Pancreas (tissue), 10 donors: ENCODE measurements at regions of chr17 and their contacts with region 1.

Region 1: GRCh38 chr17:34199932-34200534 is 55.1 kb upstream of the CCL2 start:
- DNase-seq: peak in 5 of 6 donors; percentile 60 to 83 (median 66)
- ATAC-seq: peak; percentile 87 to 99 (median 97)
- H3K4me3 ChIP-seq: no peak overlapping the region
- H3K27ac ChIP-seq: no peak overlapping the region
- H3K4me1 ChIP-seq: peaks cover 0 to 4% (median 0%) of the 10 kb centered on the region in 3 donors
- H3K27me3 ChIP-seq: peaks cover 0 to 36% (median 12%) of the 10 kb centered on the region in 4 donors
- CTCF ChIP-seq: peak; percentile 93 to 100 (median 98)

Region 2: DNA sequence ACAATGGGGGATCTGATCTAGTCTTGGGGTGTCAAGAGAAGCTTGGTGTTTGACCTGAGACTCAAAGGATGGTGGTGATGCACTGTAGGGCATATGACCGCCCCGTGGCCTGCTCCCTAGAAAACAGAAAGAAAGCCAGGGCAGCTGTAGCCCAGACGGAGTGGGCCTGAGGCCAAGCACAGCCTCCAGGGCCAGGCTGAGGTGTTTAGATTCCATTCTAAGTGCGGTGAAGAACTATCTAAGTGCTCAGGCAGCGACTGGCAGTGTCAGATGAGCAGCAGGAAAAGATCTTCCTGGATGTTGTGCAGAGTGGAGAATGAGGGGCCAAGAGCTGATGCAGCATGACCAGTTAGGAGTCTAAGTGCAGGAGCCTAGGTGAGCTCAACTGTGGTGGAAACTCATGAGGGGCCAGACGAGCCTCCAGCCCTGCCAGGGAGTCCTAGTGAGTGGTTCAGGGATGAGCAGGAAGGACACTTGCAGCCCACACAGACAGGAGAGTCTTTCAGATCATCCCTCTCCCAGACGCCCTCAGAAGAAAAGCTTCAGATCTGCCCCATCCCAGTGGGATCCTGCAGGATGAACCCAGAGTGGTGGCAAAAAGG is 259.2 kb before region 1 on chr17:
- intact Hi-C with region 1: no loop called
- DNase-seq: no peak
- ATAC-seq: peak in 2 of 4 donors; percentile 37 to 61
- H3K4me3 ChIP-seq: no peak overlapping the region
- H3K27ac ChIP-seq: no peak overlapping the region
- H3K4me1 ChIP-seq: peaks cover 0 to 16% (median 0%) of the 10 kb centered on the region in 3 donors
- H3K27me3 ChIP-seq: no peaks in the 10 kb centered on the region
- CTCF ChIP-seq: no peak

Region 3: DNA sequence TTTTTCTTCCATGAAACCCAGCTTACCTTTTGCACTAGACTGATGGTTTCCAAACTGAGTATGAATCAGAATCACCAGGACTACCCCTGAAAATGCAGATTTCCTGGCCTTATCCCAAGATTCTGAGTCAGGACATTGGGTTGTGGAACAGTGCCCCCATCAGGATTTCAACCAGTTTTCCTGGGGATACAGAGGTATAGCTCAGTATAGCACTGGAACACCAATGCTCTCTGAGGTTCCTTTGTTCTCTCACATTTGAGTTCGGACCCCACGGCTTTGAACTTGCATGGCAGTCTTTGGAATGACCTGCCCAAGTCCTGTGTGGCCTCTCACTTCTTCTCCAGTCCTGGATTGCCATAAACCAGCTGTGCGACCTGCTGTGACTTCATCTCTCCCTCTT is 106.4 kb after region 1 on chr17:
- intact Hi-C with region 1: loop called in 1 of 3 experiments (anchors 10 kb)
- DNase-seq: peak in 2 of 6 donors; percentile 17 to 23
- ATAC-seq: peak in 3 of 4 donors; percentile 21 to 81 (median 77)
- H3K4me3 ChIP-seq: no peak overlapping the region
- H3K27ac ChIP-seq: no peak overlapping the region
- H3K4me1 ChIP-seq: no peaks in the 10 kb centered on the region
- H3K27me3 ChIP-seq: no peaks in the 10 kb centered on the region
- CTCF ChIP-seq: peak in 1 of 4 donors; percentile 10

Region 4: DNA sequence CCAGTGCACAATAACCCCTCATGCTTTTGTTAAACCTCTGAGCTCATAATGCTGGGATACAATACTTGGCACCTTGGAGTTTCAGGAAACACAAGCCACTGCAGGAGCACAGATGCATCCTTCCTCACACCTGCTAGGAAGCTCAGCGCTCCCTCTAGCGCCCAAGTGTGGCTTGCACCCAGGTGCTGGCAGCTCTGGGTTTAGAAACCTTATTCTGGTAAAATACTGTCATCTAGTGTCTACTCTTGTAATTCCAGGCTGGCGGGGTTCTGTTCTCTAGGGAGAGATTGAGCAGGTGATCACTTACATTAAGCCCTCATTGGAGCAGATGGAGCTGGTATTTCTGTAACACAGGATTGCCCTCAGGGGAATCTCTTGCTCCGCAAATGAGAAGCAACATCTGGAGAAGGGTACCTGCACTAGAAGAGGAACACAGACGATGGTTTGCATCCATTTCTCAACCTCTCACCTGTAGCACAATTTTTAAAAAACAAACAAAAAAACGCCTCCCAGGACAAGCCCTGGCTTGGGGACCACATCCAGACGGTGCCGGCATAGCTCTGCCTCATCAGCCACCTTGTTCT is 161.5 kb after region 1 on chr17:
- intact Hi-C with region 1: loop called (anchors 5 to 10 kb)
- DNase-seq: peak; percentile 81 to 94 (median 89)
- ATAC-seq: peak; percentile 93 to 99 (median 98)
- H3K4me3 ChIP-seq: no peak overlapping the region
- H3K27ac ChIP-seq: no peak overlapping the region
- H3K4me1 ChIP-seq: no peaks in the 10 kb centered on the region
- H3K27me3 ChIP-seq: no peaks in the 10 kb centered on the region
- CTCF ChIP-seq: peak; percentile 88 to 99 (median 96)